ENCODE measurements at regions of chr2 and their contacts with region 1.

Region 1: DNA sequence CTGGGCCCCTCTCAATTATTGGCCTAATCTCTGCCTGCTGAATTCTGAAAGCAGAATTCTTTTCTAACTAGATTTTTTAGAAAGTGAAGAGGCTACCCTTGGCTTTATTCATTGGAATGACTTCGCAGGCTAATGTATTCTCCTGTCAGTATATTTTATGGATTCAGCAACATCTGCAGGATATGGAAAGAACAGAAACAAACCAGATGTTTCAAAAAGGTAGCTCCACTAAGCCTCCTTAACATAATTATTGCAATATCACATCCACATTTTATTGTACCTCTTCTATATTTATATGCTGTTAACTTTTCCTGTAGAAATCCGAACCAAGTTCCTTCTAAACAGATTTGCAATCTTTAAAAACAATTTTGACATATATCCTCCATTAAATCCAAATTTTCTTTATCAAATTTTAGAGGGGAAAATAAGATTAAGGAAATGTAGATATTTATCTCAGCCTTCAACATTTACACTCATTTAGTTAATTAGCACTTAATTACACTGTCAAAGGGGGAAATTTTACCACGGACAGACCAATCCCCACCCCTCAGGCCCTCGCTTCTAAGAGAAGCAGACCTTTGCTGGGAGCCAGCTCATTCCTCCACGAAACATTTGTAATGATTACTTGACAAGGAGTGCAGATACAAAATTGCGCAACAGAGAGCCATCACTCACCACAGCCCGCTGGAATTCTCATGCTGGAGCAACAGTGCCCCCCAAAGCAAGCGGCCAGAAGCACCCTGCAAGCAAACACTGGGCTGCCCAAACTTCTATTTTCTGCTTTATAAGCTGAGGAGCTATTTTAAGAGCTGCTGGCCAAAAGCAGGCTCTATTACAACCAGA is 253.4 kb downstream of the ETAA1 start:
- DNase-seq: peak; percentile 67
- H3K4me3 ChIP-seq: no peak overlapping the region; a peak in 1 of 4 replicates
- H3K27ac ChIP-seq: peak overlapping the region; percentile 36 to 90; a peak in 3 of 4 replicates
- H3K4me1 ChIP-seq: peaks cover 26 to 29% of the 10 kb centered on the region in 2 experiments; a peak in 3 of 4 replicates
- H3K27me3 ChIP-seq: no peaks in the 10 kb centered on the region
- CTCF ChIP-seq: peak; percentile 91
- EP300 ChIP-seq: peak; percentile 68 to 83; a peak in 3 of 4 replicates
- RAD21 ChIP-seq: peak; percentile 95

Region 2: GRCh38 chr2:66434679-66435548 is 1215.6 kb before region 1 on chr2 and contains the start of gene MEIS1:
- CTCF ChIA-PET with region 1: interaction called, 22 read pairs
- POLR2A ChIA-PET with region 1: interaction called, 16 read pairs
- DNase-seq: peak; percentile 88
- H3K4me3 ChIP-seq: peak within 1 kb of the TSS; percentile 85 to 90
- H3K27ac ChIP-seq: peak within 1 kb of the TSS; percentile 76 to 81
- H3K4me1 ChIP-seq: peaks cover 0 to 20% of the 10 kb centered on the region in 2 experiments; a peak in 2 of 4 replicates
- H3K27me3 ChIP-seq: no peaks in the 10 kb centered on the region
- CTCF ChIP-seq: peak; percentile 11; the same call in 1 of the 2 replicates
- EP300 ChIP-seq: peak in 1 of 2 experiments; percentile 5; a peak in 1 of 4 replicates
- RAD21 ChIP-seq: peak; percentile 22
- polyA plus RNA-seq, gene MEIS1: 16.9 and 21.8 TPM in 2 replicates

Region 3: GRCh38 chr2:67215214-67216055 is 435.1 kb before region 1 on chr2:
- CTCF ChIA-PET with region 1: interaction called, 11 read pairs
- POLR2A ChIA-PET with region 1: no interaction called
- DNase-seq: peak; percentile 69
- H3K4me3 ChIP-seq: no peak overlapping the region; a peak in 1 of 4 replicates
- H3K27ac ChIP-seq: peak overlapping the region in 1 of 2 experiments; percentile 53; a peak in 2 of 4 replicates
- H3K4me1 ChIP-seq: peaks cover 0 to 18% of the 10 kb centered on the region in 2 experiments; a peak in 2 of 4 replicates
- H3K27me3 ChIP-seq: no peaks in the 10 kb centered on the region
- CTCF ChIP-seq: peak; percentile 71
- EP300 ChIP-seq: no peak
- RAD21 ChIP-seq: peak; percentile 97

Region 4: GRCh38 chr2:67561457-67561965 is 89.0 kb before region 1 on chr2:
- CTCF ChIA-PET with region 1: interaction called, 29 read pairs
- POLR2A ChIA-PET with region 1: interaction called, 11 read pairs
- DNase-seq: peak; percentile 69
- H3K4me3 ChIP-seq: peak overlapping the region in 1 of 2 experiments; percentile 6; a peak in 2 of 4 replicates
- H3K27ac ChIP-seq: peak overlapping the region; percentile 79 to 98
- H3K4me1 ChIP-seq: peaks cover 13 to 20% of the 10 kb centered on the region in 2 experiments
- H3K27me3 ChIP-seq: no peaks in the 10 kb centered on the region
- CTCF ChIP-seq: no peak
- EP300 ChIP-seq: peak; percentile 55 to 99
- RAD21 ChIP-seq: peak; percentile 55

Region 5: DNA sequence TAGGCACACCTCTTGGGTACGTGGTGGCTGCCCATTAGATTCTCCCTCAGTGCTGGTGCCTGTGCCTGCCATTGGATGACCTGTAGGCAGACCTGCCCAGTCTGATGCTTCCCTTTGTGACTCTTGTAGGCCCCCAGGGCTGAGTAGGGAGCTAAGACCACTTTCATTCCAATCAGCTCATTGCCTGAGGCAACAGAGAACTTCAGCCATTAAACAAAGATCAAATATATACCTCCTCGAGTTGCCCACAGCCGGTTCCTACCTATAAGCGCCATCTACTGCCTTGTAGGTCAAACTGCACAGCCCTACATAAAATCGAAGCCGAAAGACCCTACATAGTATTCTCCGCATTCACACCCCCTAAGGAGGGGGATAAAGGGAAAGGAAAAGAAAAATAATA is 68.8 kb before region 1 on chr2:
- CTCF ChIA-PET with region 1: no interaction called
- POLR2A ChIA-PET with region 1: no interaction called
- DNase-seq: no peak
- H3K4me3 ChIP-seq: no peak overlapping the region
- H3K27ac ChIP-seq: no peak overlapping the region
- H3K4me1 ChIP-seq: no peaks in the 10 kb centered on the region
- H3K27me3 ChIP-seq: no peaks in the 10 kb centered on the region
- CTCF ChIP-seq: no peak
- EP300 ChIP-seq: no peak
- RAD21 ChIP-seq: no peak

Region 6: GRCh38 chr2:67666386-67667053 is 16.0 kb after region 1 on chr2:
- CTCF ChIA-PET with region 1: interaction called, 14 read pairs
- POLR2A ChIA-PET with region 1: no interaction called
- DNase-seq: no peak
- H3K4me3 ChIP-seq: no peak overlapping the region
- H3K27ac ChIP-seq: peak overlapping the region in 1 of 2 experiments; percentile 72; a peak in 2 of 4 replicates
- H3K4me1 ChIP-seq: peaks cover 0 to 14% of the 10 kb centered on the region in 2 experiments; a peak in 2 of 4 replicates
- H3K27me3 ChIP-seq: no peaks in the 10 kb centered on the region
- CTCF ChIP-seq: no peak
- EP300 ChIP-seq: no peak
- RAD21 ChIP-seq: no peak

Measured in SK-N-SH (cell line).